Testis (tissue), 5 donors: ENCODE measurements at regions of chr6 and their contacts with region 1.

Region 1: GRCh38 chr6:34414999-34415858 is 10.6 kb downstream of the RPS10 start:
- DNase-seq: peak; percentile 81
- H3K4me3 ChIP-seq: no peak overlapping the region
- H3K27ac ChIP-seq: peak overlapping the region; percentile 49 to 85
- H3K4me1 ChIP-seq: peaks cover 10% of the 10 kb centered on the region
- H3K27me3 ChIP-seq: no peaks in the 10 kb centered on the region
- CTCF ChIP-seq: peak; percentile 58 to 85 (median 84)
- POLR2A ChIP-seq: no peak

Region 2: DNA sequence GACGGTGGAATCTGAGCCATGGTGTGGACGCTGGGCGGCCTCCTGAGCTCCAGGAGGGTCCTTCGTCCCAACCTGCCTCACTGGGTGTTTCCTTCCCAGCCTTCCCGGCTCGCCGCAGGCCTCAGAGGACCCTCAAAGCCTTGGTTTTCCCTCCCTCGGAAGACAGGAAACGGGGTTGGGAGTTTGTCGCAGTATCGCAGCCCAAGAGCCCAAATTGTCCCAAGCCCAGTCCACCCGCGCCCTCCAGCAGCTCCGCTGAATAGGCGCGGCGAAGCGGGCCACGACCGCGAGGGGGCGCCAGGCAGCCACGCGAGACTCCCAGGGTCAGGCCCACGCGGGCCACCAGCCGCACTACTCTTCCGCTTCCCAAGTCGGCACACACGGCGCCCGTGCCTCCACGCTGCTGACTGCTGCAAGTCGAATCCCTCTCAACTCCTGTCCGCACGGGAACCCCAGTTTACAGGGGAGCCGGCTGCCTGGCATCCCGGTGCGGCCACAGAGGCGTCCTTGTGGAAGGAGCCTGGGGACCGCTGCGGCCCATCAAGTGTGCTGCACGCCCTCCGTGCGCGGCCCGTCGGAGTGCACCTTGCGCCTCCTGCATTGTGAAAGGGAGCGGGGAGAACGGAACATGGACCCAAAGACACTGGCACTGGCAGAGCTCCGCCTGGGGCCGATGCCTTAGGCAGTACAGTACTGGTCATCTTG is 219.0 kb before region 1 on chr6:
- intact Hi-C with region 1: loop called (anchors 10 kb)
- DNase-seq: peak; percentile 92
- H3K4me3 ChIP-seq: peak overlapping the region; percentile 46 to 61
- H3K27ac ChIP-seq: no peak overlapping the region
- H3K4me1 ChIP-seq: no peaks in the 10 kb centered on the region
- H3K27me3 ChIP-seq: no peaks in the 10 kb centered on the region
- CTCF ChIP-seq: peak; percentile 87 to 96 (median 89)
- POLR2A ChIP-seq: no peak

Region 3: DNA sequence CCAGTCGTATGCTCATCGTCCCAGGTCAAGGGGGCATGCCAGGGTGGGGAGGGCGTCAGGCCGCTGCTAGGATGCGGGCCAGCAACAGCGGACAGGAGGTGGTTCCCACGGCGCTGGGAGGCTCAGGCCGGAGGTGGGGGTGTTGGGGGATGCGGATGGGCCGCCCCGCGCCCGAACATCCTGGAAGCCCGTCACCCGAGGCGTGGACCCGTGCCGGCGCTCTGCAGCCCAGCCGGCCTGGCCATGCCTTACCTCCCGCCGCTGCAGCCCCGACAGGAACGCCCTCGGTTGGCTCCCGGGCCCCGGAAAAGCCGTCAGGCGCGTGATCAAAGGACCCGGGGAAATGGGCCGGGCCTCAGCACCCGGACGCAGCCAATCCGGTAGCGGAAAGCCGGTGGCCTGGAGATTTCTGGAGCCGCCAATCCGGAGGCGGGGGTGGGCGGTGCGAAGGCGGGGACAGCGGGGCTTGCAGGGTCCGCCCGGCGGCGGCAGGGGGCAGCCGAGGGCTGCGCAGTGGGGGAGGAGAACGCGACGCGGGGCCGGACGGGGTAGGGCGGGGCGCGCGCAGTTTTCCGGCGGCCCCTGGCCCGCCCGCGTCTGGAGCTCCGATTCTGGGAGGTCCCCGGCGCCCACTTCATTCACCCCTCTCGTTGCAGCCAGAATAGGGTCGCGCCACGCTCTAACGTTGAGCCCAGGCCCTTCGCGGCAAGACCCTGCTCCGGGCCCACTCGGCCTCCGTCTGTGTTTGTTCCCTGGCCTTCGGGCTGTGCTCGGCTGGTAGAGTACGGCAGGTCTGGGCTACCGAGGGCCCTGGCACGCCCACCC is 166.3 kb before region 1 on chr6 and contains the start of gene SMIM29:
- intact Hi-C with region 1: loop called (anchors 10 kb)
- DNase-seq: peak; percentile 97
- H3K4me3 ChIP-seq: peak within 1 kb of the TSS; percentile 80 to 85
- H3K27ac ChIP-seq: peak within 1 kb of the TSS; percentile 82 to 86
- H3K4me1 ChIP-seq: peaks cover 11% of the 10 kb centered on the region
- H3K27me3 ChIP-seq: no peaks in the 10 kb centered on the region
- CTCF ChIP-seq: peak; percentile 91 to 93 (median 93)
- POLR2A ChIP-seq: no peak
- total RNA-seq, gene SMIM29: 27.6 to 35.8 TPM